SK-MEL-5 (cell line): ENCODE measurements at regions of chr2 and their contacts with region 1.

Region 1: DNA sequence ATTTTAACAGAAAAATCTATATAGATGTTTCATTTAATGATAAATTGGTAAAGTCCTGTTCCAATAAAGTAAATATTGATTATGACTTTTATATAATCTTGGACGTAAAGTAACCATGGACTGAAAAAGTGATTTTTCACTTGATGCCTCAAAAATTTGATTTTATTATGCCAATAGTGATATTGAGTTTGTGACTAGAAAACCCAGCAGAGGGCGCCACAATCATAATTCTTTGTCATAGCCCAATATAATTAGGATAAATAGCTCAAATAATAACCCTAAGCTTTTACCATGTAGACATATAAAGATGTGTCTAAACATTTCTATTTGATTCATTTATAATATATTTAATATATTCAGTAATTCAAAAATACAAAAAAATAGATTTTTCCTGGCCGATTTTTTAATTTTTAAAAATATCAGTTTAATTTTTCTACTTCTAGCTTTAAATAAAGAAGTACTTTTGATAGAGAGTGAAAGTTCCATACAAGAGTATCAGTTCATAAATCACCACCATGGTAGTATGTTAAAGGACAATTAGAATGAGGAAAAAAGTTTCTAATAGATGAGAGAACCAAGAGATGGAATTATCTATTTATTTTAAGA is 30.7 kb downstream of the CAMKMT start:
- DNase-seq: peak; percentile 76

Region 2: GRCh38 chr2:44549095-44549463 is 156.6 kb after region 1 on chr2:
- in situ Hi-C with region 1: no loop called
- DNase-seq: peak; percentile 62

Region 3: DNA sequence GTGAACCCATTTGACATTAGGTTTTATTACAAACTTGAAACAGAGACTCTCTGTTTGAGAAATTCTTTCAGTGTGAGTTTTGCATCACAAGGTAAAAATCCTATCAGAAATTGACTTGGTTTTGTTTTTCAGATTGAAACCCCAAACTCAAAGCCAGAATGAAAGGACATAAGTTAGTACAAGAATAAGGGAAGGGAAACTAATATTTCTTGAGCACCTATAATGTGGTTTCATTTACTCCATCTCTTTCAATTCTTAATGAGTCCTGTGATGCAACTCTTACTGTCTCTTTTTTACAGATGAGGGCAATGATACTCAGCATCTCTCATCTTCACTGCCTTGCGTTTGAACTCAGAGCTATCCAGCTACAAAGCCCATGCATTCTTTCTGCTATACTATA is 339.1 kb after region 1 on chr2:
- in situ Hi-C with region 1: loop called (anchors 25 kb)
- DNase-seq: no peak